T47D (cell line): ENCODE measurements at regions of chr5 and their contacts with region 1.

Region 1: DNA sequence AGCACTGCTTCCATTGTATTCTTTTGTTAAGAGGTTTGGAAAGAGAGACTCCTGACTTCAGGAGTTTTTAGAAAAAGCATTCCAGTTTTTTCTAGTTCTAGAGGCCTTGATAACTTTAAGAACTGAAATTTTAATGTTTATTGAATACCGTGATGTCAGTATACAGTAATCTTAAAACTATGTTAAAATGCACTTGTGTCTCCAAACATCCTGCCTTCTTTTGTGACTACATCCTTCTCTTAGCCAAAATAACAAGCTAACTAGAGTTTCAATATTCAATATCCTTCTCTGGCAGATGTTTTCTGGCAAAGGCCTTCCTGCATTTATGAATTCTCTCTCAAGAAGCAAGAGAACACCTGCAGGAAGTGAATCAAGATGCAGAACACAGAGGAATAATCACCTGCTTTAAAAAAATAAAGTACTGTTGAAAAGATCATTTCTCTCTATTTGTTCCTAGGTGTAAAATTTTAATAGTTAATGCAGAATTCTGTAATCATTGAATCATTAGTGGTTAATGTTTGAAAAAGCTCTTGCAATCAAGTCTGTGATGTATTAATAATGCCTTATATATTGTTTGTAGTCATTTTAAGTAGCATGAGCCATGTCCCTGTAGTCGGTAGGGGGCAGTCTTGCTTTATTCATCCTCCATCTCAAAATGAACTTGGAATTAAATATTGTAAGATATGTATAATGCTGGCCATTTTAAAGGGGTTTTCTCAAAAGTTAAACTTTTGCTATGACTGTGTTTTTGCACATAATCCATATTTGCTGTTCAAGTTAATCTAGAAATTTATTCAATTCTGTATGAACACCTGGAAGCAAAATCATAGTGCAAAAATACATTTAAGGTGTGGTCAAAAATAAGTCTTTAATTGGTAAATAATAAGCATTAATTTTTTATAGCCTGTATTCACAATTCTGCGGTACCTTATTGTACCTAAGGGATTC is 43.1 kb downstream of the NDFIP1 start:
- DNase-seq: peak; percentile 23 to 79

Region 2: DNA sequence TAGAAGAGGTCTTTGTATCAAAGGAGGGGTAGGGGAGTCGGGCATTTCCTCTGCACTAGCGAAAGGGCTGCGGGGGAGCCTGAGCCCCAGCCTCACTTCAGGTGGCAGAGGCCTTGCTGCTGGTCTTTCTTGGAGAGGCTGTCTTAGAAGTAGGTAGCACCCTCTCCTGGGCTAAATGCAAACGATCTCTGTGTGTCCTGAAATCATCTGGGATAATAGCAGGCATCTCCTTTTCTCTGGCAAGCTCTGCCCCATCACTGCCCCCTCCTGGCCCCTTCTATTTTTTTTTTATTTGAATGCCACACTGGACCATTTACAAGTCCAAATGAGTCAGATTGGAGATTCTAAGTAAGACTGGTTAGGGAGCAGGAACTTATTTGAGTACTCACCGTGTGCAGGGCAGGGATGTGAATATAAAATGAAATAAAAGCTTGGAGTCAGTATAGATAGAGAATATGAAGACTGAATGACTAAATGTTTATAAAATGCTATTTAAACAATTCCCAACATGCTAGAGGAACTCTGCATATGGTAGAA is 397.1 kb after region 1 on chr5:
- in situ Hi-C with region 1: loop called (anchors 25 kb)
- DNase-seq: peak; percentile 78 to 95